Activated T-helper 1 cell treated with anti-CD3 and anti-CD28 coated beads, Interleukin-12 subunit alpha, Interleukin-12 subunit beta, Interleukin-2, Interleukin-4 antibody, amounts not matched to agents 30 ng/mL and 10 ng/mL and 1 ng/mL, durations not matched to agents 14 hours and 24 hours and 36 hours (primary cell): ENCODE measurements at regions of chr2 and their contacts with region 1.

Region 1: DNA sequence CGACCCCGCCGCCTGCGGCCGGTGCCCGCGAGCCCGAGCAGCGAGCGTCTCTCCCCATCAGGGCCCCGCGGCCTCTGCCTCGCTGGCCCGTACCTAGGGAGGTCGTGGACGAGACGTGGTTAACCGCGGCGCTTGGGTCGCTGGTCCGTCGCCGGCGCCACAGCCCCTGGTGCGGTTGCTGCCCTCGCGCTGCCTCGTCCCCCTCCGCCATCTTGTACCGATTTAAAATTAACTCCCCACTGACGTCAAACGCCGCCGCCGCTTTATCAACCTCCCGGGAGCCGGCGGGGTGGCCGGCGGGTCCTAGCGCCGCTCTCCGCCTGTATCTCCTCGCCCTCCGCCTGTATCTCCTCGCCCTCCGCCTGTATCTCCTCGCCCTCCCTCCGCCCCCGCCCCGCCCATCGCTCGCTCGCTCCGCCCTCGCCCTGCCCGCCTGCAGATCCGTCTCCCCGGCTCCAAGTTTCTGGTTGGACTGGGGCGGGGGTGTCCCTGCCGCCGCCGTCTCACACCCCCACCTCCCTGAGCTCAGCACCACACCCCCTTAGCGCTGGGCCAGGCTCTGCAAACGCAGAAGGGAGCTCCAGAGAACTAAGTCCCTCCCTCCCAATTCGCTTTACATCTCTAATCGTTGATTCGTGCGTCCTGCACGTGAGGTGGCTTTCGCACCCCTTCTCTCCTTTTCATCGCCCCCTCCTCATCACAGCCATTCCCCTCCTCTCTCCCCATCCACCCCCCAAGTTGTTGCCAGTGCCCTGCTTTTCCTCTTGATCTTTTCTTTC is at the start of gene ATL2:
- DNase-seq: peak; percentile 92
- H3K4me3 Mint-ChIP-seq: peak within 1 kb of the TSS; percentile 95
- H3K27ac Mint-ChIP-seq: peak within 1 kb of the TSS; percentile 96
- H3K4me1 Mint-ChIP-seq: peaks cover 55% of the 10 kb centered on the region
- H3K27me3 Mint-ChIP-seq: peaks cover 14% of the 10 kb centered on the region
- total RNA-seq, gene ATL2: 62.1 and 72.5 TPM in 2 replicates

Region 2: DNA sequence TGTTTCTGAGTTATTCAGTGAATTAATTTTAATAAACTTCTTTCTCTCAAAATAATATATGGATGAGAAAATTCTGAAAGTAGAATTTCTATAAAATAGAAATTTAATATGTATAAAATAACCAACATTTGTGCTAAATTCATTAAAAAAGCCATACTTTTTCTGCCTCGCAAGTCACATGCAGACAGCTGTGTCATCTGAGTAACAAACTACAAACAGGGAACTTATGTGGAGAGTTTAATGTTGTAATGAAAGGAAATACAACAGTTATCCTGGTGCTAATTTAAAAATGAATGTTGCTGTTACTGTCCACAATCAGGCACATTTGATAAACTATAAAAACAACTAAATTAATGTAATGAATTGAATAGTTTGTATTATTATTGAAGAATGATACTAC is 429.9 kb before region 1 on chr2:
- intact Hi-C with region 1: no loop called
- DNase-seq: no peak
- H3K4me3 Mint-ChIP-seq: no peak overlapping the region
- H3K27ac Mint-ChIP-seq: no peak overlapping the region
- H3K4me1 Mint-ChIP-seq: no peaks in the 10 kb centered on the region
- H3K27me3 Mint-ChIP-seq: peaks cover 5% of the 10 kb centered on the region

Region 3: GRCh38 chr2:38064801-38065501 is 312.3 kb before region 1 on chr2:
- intact Hi-C with region 1: no loop called
- DNase-seq: no peak
- H3K4me3 Mint-ChIP-seq: no peak overlapping the region
- H3K27ac Mint-ChIP-seq: no peak overlapping the region
- H3K4me1 Mint-ChIP-seq: no peaks in the 10 kb centered on the region
- H3K27me3 Mint-ChIP-seq: no peaks in the 10 kb centered on the region

Region 4: GRCh38 chr2:38076606-38077430 is 300.4 kb before region 1 on chr2:
- intact Hi-C with region 1: loop called (anchors 2 kb)
- DNase-seq: peak; percentile 63
- H3K4me3 Mint-ChIP-seq: peak overlapping the region; percentile 80
- H3K27ac Mint-ChIP-seq: peak overlapping the region; percentile 84
- H3K4me1 Mint-ChIP-seq: peaks cover 51% of the 10 kb centered on the region
- H3K27me3 Mint-ChIP-seq: peaks cover 38% of the 10 kb centered on the region

Region 5: GRCh38 chr2:38322224-38322914 is 54.9 kb before region 1 on chr2:
- intact Hi-C with region 1: no loop called
- DNase-seq: no peak
- H3K4me3 Mint-ChIP-seq: no peak overlapping the region
- H3K27ac Mint-ChIP-seq: no peak overlapping the region
- H3K4me1 Mint-ChIP-seq: peaks cover 16% of the 10 kb centered on the region
- H3K27me3 Mint-ChIP-seq: no peaks in the 10 kb centered on the region

Region 6: DNA sequence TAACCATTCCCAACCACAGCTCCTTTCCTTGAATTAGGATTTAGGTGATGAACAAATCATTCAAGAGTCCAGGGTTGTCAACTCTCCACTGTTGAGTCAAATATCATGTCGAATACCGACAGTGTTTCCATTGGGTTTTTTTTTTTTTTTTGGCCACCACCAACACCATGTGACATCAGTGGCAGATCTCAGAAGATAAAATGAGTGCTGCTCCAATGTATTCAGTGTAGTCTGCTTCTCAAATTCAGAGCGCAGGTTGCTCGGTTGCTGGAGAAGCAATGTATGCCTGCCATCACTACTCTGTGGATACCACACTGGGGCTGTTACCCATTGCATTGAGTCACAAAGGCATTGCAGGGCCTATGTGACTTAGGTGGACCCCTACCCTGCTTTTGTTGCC is 10.6 kb after region 1 on chr2:
- intact Hi-C with region 1: loop called (anchors 1 kb)
- DNase-seq: peak; percentile 9
- H3K4me3 Mint-ChIP-seq: no peak overlapping the region
- H3K27ac Mint-ChIP-seq: no peak overlapping the region
- H3K4me1 Mint-ChIP-seq: peaks cover 23% of the 10 kb centered on the region
- H3K27me3 Mint-ChIP-seq: peaks cover 11% of the 10 kb centered on the region

Region 7: GRCh38 chr2:38474715-38475566 is 97.7 kb after region 1 on chr2:
- intact Hi-C with region 1: loop called (anchors 1 kb)
- DNase-seq: no peak
- H3K4me3 Mint-ChIP-seq: no peak overlapping the region
- H3K27ac Mint-ChIP-seq: peak overlapping the region; percentile 42
- H3K4me1 Mint-ChIP-seq: peaks cover 32% of the 10 kb centered on the region
- H3K27me3 Mint-ChIP-seq: peaks cover 9% of the 10 kb centered on the region

Region 8: GRCh38 chr2:38602732-38603401 is 225.6 kb after region 1 on chr2 and contains the start of gene HNRNPLL:
- intact Hi-C with region 1: no loop called
- DNase-seq: peak; percentile 94
- H3K4me3 Mint-ChIP-seq: peak within 1 kb of the TSS; percentile 91
- H3K27ac Mint-ChIP-seq: peak within 1 kb of the TSS; percentile 92
- H3K4me1 Mint-ChIP-seq: peaks cover 54% of the 10 kb centered on the region
- H3K27me3 Mint-ChIP-seq: no peaks in the 10 kb centered on the region
- total RNA-seq, gene HNRNPLL: 85.8 and 91.5 TPM in 2 replicates

Region 9: DNA sequence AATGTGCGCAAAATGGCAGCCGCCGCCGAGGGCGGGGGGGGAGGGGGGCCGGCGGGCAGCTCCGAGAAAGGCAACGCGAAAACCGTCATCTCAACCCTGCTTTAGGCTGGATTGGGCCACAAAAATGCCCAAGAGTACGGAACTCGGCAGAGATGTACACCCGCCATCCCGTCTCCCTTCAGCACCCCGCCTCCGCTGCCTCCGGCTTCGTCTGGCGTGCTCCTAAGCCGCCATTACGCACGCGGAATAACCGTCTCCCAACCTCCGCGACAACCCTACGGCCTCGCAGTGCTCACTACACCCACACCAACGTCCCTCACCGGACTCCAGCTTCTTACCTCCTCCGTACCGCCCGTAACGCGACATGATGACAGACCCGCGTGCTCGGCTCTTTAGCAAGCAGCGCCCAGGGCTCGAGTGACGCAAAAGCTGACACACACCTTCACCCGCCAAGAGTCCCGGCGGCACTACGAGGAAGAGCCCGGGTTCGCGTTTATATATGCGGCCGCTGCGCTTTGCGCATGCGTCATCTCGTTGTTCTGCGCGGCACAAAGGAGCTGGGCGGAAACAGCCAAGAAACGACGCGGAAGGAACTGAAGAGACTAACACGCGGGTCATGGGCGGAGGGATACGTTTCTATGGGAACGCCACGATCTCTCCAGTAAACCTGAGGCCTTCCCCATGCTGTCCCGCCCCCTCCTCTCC is 373.8 kb after region 1 on chr2 and contains the start of gene SRSF7:
- intact Hi-C with region 1: loop called (anchors 1 kb)
- DNase-seq: peak; percentile 96
- H3K4me3 Mint-ChIP-seq: peak within 1 kb of the TSS; percentile 98
- H3K27ac Mint-ChIP-seq: peak within 1 kb of the TSS; percentile 100
- H3K4me1 Mint-ChIP-seq: peaks cover 54% of the 10 kb centered on the region
- H3K27me3 Mint-ChIP-seq: no peaks in the 10 kb centered on the region
- total RNA-seq, gene SRSF7: 417 and 422 TPM in 2 replicates

Region 10: GRCh38 chr2:39227628-39228412 is 850.6 kb after region 1 on chr2:
- intact Hi-C with region 1: loop called (anchors 10 kb)
- DNase-seq: peak; percentile 70
- H3K4me3 Mint-ChIP-seq: peak overlapping the region; percentile 76
- H3K27ac Mint-ChIP-seq: peak overlapping the region; percentile 83
- H3K4me1 Mint-ChIP-seq: peaks cover 54% of the 10 kb centered on the region
- H3K27me3 Mint-ChIP-seq: no peaks in the 10 kb centered on the region